ENCODE measurements at regions of chr1 and their contacts with region 1.

Region 1: DNA sequence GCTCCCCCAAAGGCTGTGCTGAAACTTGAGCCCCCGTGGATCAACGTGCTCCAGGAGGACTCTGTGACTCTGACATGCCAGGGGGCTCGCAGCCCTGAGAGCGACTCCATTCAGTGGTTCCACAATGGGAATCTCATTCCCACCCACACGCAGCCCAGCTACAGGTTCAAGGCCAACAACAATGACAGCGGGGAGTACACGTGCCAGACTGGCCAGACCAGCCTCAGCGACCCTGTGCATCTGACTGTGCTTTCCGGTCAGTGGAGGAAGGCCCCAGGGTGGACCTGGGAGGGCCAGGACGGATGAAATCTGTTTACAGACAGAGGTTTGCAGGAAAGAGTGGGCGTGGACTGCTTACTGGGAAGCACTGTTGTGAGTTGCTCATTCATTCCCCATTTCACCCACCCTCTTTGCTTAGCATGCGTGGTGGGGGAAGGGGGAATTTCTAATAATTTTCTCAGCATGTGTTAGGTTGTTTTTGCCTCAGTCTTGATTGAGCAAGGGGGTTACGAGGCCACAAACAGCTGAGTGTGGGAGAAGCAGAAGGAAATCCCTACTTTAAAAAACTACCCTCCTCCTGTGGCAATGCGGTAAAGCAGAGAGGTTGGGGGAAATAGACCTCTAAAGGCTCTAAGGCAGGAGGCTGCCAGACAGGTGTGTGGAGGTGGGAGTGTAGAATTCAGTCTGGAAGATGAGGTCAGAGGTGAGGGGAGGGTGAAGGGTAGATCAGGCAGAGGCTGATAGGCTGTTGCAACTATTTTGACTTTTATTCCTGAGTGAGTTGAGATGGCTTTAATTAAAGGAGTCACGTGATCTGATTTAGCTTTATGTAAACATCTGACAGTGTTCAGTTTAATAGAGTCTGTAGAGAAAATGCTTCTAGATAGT is 1.3 kb downstream of the FCGR2A start:
- DNase-seq: no peak
- H3K4me3 ChIP-seq: no peak overlapping the region
- CTCF ChIP-seq: no peak

Region 2: DNA sequence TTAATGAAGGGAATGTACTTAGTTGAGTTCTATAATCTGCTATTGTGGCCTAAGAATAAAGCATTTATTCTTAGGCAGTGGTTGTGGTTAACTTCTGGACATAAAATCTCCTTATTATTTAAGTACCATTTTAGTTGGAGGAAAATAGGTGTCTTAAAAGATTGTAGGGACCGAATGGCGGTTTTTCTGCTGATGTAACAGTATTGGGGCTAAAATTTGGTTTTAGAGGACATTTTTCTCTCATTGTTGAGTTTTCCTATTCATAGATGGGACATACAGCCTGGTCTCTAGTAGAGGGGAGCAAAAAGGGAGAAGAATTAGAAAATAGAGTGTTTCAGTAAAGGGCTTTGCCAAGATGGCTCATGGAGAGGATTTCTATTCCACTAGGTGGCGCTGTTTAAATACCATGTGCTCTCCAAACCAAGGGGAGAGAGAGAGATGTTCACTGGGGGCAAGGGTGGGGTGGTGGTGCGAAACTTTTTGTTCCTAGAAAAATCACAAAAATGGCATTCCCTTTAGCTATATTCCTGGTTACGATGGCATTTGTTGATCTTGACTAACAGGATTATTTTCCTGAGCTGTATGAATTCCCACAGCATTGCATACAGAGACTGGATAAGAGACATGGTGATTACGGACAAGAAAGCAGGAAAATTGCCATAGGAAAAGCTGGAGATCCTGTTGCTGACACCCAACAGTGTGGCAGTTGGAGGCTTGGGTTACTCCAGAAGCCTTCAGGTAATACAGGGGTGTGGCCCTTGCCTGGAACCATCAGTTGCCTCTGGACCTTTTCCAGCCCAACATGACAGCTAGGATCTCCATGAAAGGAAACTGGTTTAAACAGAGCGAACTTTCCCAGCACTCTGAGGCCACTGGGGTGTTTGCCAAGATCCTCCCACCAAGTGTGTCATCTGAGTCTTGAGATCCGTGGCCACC is 19.5 kb before region 1 on chr1:
- CTCF ChIA-PET with region 1: interaction called, 25 read pairs
- POLR2A ChIA-PET with region 1: no interaction called
- DNase-seq: no peak
- H3K4me3 ChIP-seq: no peak overlapping the region
- CTCF ChIP-seq: peak; percentile 44